Left cardiac atrium (tissue), 4 donors: ENCODE measurements at regions of chr6 and their contacts with region 1.

Region 1: DNA sequence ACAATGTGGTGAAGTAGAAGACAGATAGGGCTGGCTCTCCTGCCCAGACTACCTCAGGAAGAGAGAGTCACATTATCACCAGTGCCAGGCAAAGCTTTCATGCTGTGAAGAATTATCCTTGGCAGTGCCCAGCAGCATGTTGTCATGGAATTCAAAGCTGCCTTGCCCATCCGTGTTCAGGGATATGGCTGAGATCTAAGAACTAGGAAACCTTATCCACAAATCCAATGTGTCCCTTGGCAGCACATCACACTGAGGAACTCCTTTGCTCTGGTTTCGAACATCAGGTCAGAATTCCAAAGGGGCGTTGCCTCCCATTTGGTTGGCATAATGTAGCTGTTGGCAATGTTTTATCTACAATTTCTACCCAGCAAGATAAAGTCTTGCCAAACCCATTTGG is 52.7 kb downstream of the ADGRF1 start:
- DNase-seq: peak; percentile 48
- ATAC-seq: peak; percentile 73 to 78

Region 2: GRCh38 chr6:46760925-46761324 is 228.5 kb before region 1 on chr6:
- intact Hi-C with region 1: no loop called
- DNase-seq: no peak
- ATAC-seq: no peak

Region 3: GRCh38 chr6:46848684-46849360 is 140.6 kb before region 1 on chr6:
- intact Hi-C with region 1: loop called (anchors 2 to 5 kb)
- DNase-seq: peak; percentile 90
- ATAC-seq: peak; percentile 97 to 98